B cell (primary cell): ENCODE measurements at regions of chr10 and their contacts with region 1.

Region 1: DNA sequence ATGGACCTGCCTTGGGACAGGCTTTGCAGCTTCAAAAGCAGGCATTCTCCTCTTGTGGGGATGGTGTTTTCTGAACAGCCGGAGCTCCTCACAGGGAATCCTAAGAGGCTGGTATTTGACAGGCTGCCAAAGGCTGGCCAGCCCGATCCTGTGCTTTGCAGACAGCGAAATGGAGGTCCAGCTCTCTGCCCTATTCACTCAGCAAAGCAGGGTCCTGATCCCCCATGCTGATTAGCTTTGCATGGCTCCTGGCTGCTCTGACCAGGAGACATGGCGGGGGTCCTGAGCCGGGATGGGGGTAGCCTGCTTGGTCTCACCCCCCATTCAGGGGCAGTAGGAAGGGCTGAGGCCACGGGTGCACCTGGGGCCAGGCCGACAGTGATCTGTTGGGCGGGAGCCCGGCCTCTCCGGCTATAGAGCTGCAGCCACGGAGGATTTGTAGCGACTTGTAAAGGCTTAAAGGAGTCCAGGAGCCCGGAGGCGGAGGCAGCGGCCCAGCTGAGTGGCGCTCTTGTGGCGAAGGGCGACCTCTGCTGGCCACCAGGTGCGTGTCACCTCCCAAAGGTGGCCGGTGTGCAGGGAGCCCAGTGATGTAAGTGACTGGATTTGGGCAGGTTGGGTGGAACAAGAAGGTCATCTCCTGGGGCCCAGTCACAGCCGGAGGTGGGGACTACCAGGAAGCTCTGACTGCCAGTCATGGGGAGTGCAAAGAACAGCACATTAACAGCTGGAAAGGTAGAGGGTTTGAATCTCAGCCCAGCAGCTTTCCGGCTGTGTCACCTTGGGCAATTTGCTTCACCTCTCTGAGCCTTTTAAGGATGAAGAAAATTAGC is 126.5 kb downstream of the ZMIZ1 start:
- DNase-seq: peak; percentile 80
- ATAC-seq: peak; percentile 71
- H3K4me3 ChIP-seq: no peak overlapping the region
- H3K4me3 Mint-ChIP-seq: no peak overlapping the region
- H3K27ac ChIP-seq: no peak overlapping the region
- H3K27ac Mint-ChIP-seq: peak overlapping the region; percentile 56
- H3K4me1 ChIP-seq: peaks cover 14 to 17% of the 10 kb centered on the region in 2 donors
- H3K4me1 Mint-ChIP-seq: peaks cover 17% of the 10 kb centered on the region
- H3K27me3 ChIP-seq: peaks cover 0 to 12% (median 4%) of the 10 kb centered on the region in 4 experiments
- H3K27me3 Mint-ChIP-seq: peaks cover 11% of the 10 kb centered on the region
- CTCF ChIP-seq: peak; percentile 96

Region 2: GRCh38 chr10:77710759-77711682 is 1484.3 kb before region 1 on chr10:
- CTCF ChIA-PET with region 1: no interaction called
- POLR2A ChIA-PET with region 1: no interaction called
- intact Hi-C with region 1: loop called (anchors 5 kb)
- DNase-seq: peak; percentile 73
- ATAC-seq: peak; percentile 94
- H3K4me3 ChIP-seq: peak overlapping the region in 4 of 5 experiments; percentile 26 to 50 (median 35)
- H3K4me3 Mint-ChIP-seq: peak overlapping the region; percentile 79
- H3K27ac ChIP-seq: no peak overlapping the region
- H3K27ac Mint-ChIP-seq: no peak overlapping the region
- H3K4me1 ChIP-seq: peaks cover 7 to 17% of the 10 kb centered on the region in 2 donors
- H3K4me1 Mint-ChIP-seq: peaks cover 15% of the 10 kb centered on the region
- H3K27me3 ChIP-seq: peaks cover 0 to 13% (median 3%) of the 10 kb centered on the region in 4 experiments
- H3K27me3 Mint-ChIP-seq: peaks cover 24% of the 10 kb centered on the region
- CTCF ChIP-seq: peak; percentile 97

Region 3: DNA sequence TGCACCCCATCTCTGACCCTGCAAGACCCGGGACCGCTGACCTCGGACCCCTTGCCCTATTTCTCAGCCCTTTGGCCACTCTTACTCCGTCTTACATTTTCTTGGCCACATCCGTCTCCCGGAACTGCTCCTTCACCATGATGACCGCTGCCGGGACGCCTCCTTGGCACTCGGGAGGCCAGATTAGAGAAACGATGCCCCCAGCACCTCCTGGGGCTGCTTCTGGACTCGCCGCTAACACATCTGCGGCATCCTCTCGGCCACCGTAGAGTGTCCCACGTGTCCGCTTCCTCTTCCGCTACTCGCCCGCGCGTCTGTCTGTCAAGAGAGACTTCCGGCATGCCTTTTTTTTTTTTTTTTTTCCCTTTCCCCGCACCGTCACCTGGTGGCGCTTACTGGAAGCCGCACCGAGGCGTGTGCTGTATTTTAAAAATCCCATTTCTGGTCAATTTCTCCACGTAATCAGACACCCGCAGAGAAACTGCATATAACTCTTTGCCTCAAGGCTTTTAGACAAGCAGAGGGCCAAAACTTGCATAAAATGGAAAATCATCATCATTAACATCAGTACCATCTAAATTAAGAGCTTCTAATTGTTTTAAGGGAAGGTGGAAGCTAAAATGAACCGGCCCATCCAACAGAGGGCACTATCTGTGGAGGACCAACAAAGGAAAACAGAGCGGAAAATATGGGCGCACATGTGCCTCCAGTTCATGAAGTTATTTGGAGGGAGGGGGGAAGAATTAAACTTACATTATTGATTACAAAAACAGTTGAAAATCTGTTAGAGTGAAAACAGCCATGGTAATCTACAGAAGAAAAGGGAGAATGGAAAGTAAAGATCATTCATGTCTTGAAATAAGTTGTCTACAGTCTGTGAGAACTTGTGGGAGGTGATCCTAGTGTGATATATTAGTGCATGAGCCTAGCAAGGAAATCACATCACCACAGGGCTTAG is 1165.8 kb before region 1 on chr10 and contains the start of gene POLR3A:
- CTCF ChIA-PET with region 1: interaction called, 11 read pairs
- POLR2A ChIA-PET with region 1: no interaction called
- intact Hi-C with region 1: loop called (anchors 5 kb)
- DNase-seq: peak; percentile 96
- ATAC-seq: peak; percentile 60
- H3K4me3 ChIP-seq: peak within 1 kb of the TSS; percentile 78 to 100 (median 96)
- H3K4me3 Mint-ChIP-seq: peak within 1 kb of the TSS; percentile 99
- H3K27ac ChIP-seq: peak within 1 kb of the TSS; percentile 43 to 81
- H3K27ac Mint-ChIP-seq: peak within 1 kb of the TSS; percentile 89
- H3K4me1 ChIP-seq: peaks cover 18 to 28% of the 10 kb centered on the region in 2 donors
- H3K4me1 Mint-ChIP-seq: peaks cover 37% of the 10 kb centered on the region
- H3K27me3 ChIP-seq: no peaks in the 10 kb centered on the region
- H3K27me3 Mint-ChIP-seq: no peaks in the 10 kb centered on the region
- CTCF ChIP-seq: peak; percentile 64
- total RNA-seq, gene POLR3A: 18.3 and 18.4 TPM in 2 replicates

Region 4: DNA sequence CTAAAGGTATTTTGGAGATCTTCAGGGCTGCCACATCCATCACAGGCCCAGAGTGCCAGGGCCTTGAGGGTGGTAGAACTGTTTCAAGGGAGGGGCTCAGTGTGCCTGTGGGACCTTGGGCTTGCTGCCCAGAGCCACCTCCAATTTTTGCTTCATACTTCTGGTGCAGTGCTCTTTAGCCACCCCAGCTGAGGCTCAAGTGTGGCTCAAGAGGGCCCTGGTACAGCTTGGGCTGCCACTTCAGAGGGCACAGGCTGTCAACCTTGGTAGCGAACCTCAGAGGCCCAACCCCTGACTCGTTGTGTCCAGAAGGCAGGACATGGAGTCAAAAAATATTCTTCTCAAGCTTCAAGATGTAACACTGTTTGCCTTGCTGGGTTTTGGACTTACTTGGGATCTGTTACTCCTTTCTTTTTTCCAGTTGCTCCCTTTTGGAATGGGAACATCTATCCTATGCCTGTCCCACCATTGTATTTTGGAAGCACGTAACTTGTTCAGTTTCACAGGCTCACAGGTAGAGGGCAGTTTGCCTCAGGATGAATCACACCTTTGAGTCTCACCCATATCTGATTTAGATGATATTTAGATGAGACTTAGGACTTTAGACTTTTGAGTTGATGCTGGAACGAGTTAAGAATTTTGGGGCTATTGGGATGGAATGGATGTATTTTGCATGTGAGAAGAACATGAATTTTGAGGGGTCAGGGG is 936.8 kb before region 1 on chr10:
- CTCF ChIA-PET with region 1: interaction called, 17 read pairs
- POLR2A ChIA-PET with region 1: no interaction called
- intact Hi-C with region 1: no loop called
- DNase-seq: peak; percentile 20
- ATAC-seq: no peak
- H3K4me3 ChIP-seq: no peak overlapping the region
- H3K4me3 Mint-ChIP-seq: no peak overlapping the region
- H3K27ac ChIP-seq: no peak overlapping the region
- H3K27ac Mint-ChIP-seq: no peak overlapping the region
- H3K4me1 ChIP-seq: no peaks in the 10 kb centered on the region
- H3K4me1 Mint-ChIP-seq: no peaks in the 10 kb centered on the region
- H3K27me3 ChIP-seq: peaks cover 0 to 5% (median 0%) of the 10 kb centered on the region in 4 experiments
- H3K27me3 Mint-ChIP-seq: peaks cover 11% of the 10 kb centered on the region
- CTCF ChIP-seq: peak; percentile 19

Region 5: GRCh38 chr10:78657163-78657861 is 538.0 kb before region 1 on chr10:
- CTCF ChIA-PET with region 1: interaction called, 6 read pairs
- POLR2A ChIA-PET with region 1: no interaction called
- intact Hi-C with region 1: loop called (anchors 2 kb)
- DNase-seq: peak; percentile 40
- ATAC-seq: no peak
- H3K4me3 ChIP-seq: no peak overlapping the region
- H3K4me3 Mint-ChIP-seq: no peak overlapping the region
- H3K27ac ChIP-seq: no peak overlapping the region
- H3K27ac Mint-ChIP-seq: no peak overlapping the region
- H3K4me1 ChIP-seq: peaks cover 0 to 13% of the 10 kb centered on the region in 2 donors
- H3K4me1 Mint-ChIP-seq: peaks cover 13% of the 10 kb centered on the region
- H3K27me3 ChIP-seq: peaks cover 0 to 3% (median 1%) of the 10 kb centered on the region in 4 experiments
- H3K27me3 Mint-ChIP-seq: peaks cover 8% of the 10 kb centered on the region
- CTCF ChIP-seq: peak; percentile 50

Region 6: DNA sequence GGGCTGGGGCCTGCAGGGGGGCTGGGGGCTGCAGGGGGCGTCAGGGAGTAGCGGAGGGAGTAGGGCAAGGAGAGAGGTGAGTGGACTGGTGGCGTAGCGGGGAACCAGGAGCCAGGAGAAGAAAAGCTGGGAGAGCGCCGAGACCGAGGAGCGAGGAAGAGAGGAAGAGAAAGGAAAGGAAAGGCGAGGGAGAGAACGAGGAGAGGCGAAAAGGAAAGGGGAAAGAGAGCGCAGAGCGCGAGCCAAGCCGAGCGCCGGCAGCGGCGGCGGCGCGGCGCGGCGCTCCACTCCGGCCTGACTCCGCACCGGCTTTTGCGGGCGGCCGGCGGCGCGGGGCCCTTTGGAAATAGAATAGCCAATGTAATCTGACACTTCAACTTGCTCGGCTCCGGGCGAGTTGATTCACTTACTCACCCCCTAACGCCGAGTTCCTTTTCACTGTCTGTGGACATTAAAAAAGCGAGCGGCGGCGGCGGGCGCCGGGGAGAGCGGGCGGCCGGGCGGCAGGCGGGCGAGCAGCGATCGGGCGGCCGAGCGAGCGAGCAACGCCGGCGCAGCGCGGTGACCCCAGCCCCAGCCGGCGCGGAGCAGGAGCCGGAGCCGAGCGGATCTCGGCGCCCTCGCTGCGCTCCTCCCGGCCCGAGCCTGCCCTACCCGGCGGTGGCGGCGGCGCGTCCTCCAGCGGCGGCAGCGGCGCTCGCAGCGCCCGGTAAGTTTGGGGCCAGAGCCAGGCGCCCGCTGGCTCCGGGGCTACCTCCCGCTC is 126.6 kb before region 1 on chr10 and contains the start of gene ZMIZ1:
- CTCF ChIA-PET with region 1: interaction called, 8 read pairs
- POLR2A ChIA-PET with region 1: no interaction called
- intact Hi-C with region 1: loop called (anchors 1 kb)
- DNase-seq: peak; percentile 87
- ATAC-seq: peak; percentile 58
- H3K4me3 ChIP-seq: peak within 1 kb of the TSS; percentile 61 to 94 (median 67)
- H3K4me3 Mint-ChIP-seq: peak within 1 kb of the TSS; percentile 97
- H3K27ac ChIP-seq: no peak within 1 kb of the TSS
- H3K27ac Mint-ChIP-seq: peak within 1 kb of the TSS; percentile 74
- H3K4me1 ChIP-seq: peaks cover 18 to 35% of the 10 kb centered on the region in 2 donors
- H3K4me1 Mint-ChIP-seq: peaks cover 37% of the 10 kb centered on the region
- H3K27me3 ChIP-seq: peaks cover 0 to 30% (median 25%) of the 10 kb centered on the region in 4 experiments
- H3K27me3 Mint-ChIP-seq: peaks cover 28% of the 10 kb centered on the region
- CTCF ChIP-seq: peak; percentile 2
- total RNA-seq, gene ZMIZ1: 59.6 and 64.9 TPM in 2 replicates

Region 7: DNA sequence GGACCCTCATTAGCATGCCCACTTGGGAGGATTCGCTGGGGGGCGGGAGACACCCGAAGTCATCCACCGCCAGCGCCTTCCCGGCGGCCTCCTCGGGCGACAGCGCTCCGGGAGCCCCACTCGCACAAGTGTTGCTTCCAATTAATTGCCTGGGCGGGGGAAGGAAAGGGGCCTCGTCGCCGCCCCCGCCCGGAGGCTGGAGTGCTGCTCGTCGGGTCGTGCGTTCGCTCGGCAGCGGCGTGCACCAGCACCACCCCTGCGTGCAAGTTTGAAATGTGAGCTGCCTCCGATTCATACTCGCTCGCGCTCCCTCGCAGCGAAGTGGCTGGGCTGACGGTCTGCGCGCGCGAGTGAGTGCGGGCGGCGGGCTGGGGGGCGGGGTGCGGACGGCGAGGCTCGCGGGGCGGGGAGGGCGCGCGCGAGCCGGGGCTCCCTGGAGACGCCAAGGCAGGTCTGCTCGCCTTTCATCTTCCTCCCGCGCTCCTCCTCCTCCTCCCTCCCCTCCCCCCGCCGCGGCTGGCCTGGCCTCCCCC is 47.4 kb after region 1 on chr10:
- CTCF ChIA-PET with region 1: interaction called, 6 read pairs
- POLR2A ChIA-PET with region 1: no interaction called
- intact Hi-C with region 1: loop called (anchors 5 kb)
- DNase-seq: peak; percentile 84
- ATAC-seq: peak; percentile 42
- H3K4me3 ChIP-seq: peak overlapping the region; percentile 19 to 69 (median 63)
- H3K4me3 Mint-ChIP-seq: peak overlapping the region; percentile 91
- H3K27ac ChIP-seq: peak overlapping the region; percentile 65 to 70
- H3K27ac Mint-ChIP-seq: peak overlapping the region; percentile 91
- H3K4me1 ChIP-seq: peaks cover 47 to 53% of the 10 kb centered on the region in 2 donors
- H3K4me1 Mint-ChIP-seq: peaks cover 54% of the 10 kb centered on the region
- H3K27me3 ChIP-seq: no peaks in the 10 kb centered on the region
- H3K27me3 Mint-ChIP-seq: no peaks in the 10 kb centered on the region
- CTCF ChIP-seq: no peak

Region 8: GRCh38 chr10:79304479-79305087 is 109.3 kb after region 1 on chr10:
- CTCF ChIA-PET with region 1: no interaction called
- POLR2A ChIA-PET with region 1: no interaction called
- intact Hi-C with region 1: no loop called
- DNase-seq: no peak
- ATAC-seq: no peak
- H3K4me3 ChIP-seq: no peak overlapping the region
- H3K4me3 Mint-ChIP-seq: no peak overlapping the region
- H3K27ac ChIP-seq: no peak overlapping the region
- H3K27ac Mint-ChIP-seq: peak overlapping the region; percentile 53
- H3K4me1 ChIP-seq: no peaks in the 10 kb centered on the region
- H3K4me1 Mint-ChIP-seq: no peaks in the 10 kb centered on the region
- H3K27me3 ChIP-seq: no peaks in the 10 kb centered on the region
- H3K27me3 Mint-ChIP-seq: no peaks in the 10 kb centered on the region
- CTCF ChIP-seq: no peak